ENCODE measurements at regions of chr2 and their contacts with region 1.

Region 1: GRCh38 chr2:113248997-113249770 is 29.5 kb downstream of the PAX8 start:
- DNase-seq: peak; percentile 42
- H3K4me3 ChIP-seq: no peak overlapping the region
- H3K27ac ChIP-seq: no peak overlapping the region
- H3K27me3 ChIP-seq: no peaks in the 10 kb centered on the region
- CTCF ChIP-seq: peak; percentile 96

Region 2: GRCh38 chr2:113203901-113204519 is 45.2 kb before region 1 on chr2:
- CTCF ChIA-PET with region 1: interaction called, 19 read pairs
- POLR2A ChIA-PET with region 1: no interaction called
- DNase-seq: no peak
- H3K4me3 ChIP-seq: no peak overlapping the region
- H3K27ac ChIP-seq: no peak overlapping the region
- H3K27me3 ChIP-seq: no peaks in the 10 kb centered on the region
- CTCF ChIP-seq: peak; percentile 85

Region 3: DNA sequence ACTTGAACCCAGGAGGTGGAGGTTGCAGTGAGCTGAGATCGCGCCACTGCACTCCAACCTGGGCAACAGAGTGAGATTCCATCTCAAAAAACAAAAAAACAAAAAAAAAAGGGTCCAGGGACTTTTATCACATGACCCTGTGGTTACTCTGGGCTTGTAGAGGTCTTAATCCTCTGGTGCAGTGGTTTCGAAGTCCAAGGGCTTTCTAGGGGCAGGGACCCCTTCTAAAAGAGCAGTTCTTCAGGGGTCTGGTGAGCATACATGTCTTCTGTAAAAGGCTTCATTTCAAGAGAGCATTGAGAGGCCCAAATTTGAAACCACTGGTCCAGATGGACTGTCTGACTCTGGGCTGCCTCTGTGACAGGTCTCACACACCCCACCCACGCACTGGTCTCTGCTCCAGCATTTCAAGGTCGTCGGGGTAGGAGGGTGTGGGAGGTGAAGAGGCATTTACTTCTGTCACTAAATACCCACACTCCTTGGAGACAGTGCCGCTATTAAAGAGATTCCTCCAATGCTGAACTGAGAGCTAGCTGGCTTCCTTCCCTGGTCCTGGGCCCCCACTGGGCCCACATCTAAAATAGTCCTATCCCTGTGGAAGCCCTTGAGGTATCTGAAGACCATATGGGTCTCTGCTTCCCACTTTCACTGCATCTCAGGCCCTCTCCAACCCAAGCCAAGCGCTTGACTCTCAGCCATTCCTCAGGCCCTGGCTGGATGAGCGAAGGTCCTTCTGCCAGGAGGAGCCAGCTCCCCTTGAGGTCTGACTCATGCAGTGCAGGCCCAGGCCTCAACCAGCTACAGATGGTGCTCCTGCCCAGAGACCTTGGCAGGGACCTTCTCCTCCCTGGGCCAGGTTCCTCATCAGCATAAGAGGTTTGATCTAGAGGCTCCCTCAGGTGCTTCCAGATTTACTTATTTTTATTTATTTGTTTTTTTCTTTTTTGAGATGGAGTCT is 15.3 kb before region 1 on chr2:
- CTCF ChIA-PET with region 1: interaction called, 28 read pairs
- POLR2A ChIA-PET with region 1: no interaction called
- DNase-seq: no peak
- H3K4me3 ChIP-seq: no peak overlapping the region
- H3K27ac ChIP-seq: no peak overlapping the region
- H3K27me3 ChIP-seq: no peaks in the 10 kb centered on the region
- CTCF ChIP-seq: peak; percentile 22; the same call in 1 of the 2 replicates

Region 4: DNA sequence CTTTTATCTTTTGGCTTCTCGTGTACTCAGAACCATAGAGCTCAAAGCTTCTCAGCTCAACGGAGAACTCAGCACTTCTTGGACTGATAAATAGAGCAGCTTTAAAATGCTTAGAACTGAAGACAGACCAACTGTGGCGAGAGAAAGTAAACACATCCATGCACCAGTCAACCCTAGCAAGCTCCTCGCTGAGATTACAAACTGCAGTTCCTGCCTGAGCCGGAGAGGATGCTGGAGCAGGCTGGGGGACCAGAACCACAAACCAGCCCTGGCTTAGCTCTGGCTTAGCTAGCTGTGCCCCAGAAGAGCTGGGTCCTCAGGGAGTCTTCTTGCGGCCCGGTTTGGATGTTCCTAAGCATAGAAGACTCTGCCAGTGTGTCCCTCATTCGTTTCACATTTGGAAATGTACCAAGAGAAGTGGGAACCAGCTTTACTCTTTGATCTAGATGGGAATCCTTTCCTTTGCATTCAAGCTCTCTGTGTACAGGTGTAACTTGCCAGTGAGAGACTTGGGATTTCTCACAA is 23.9 kb after region 1 on chr2:
- CTCF ChIA-PET with region 1: interaction called, 24 read pairs
- POLR2A ChIA-PET with region 1: no interaction called
- DNase-seq: peak; percentile 20
- H3K4me3 ChIP-seq: no peak overlapping the region
- H3K27ac ChIP-seq: no peak overlapping the region
- H3K27me3 ChIP-seq: peaks cover 70% of the 10 kb centered on the region
- CTCF ChIP-seq: peak; percentile 46; the same call in 1 of the 2 replicates

Measured in AG04450 (cell line).